Activated naive CD4-positive, alpha-beta T cell treated with anti-CD3 and anti-CD28 coated beads for 36 hours (primary cell): ENCODE measurements at regions of chr1 and their contacts with region 1.

Region 1: GRCh38 chr1:160098852-160099561 is 588 bp upstream of the IGSF8 start:
- DNase-seq: peak; percentile 99
- H3K4me3 Mint-ChIP-seq: peak overlapping the region; percentile 75
- H3K27ac Mint-ChIP-seq: peak overlapping the region; percentile 81
- H3K4me1 Mint-ChIP-seq: peaks cover 50% of the 10 kb centered on the region
- H3K27me3 Mint-ChIP-seq: no peaks in the 10 kb centered on the region

Region 2: DNA sequence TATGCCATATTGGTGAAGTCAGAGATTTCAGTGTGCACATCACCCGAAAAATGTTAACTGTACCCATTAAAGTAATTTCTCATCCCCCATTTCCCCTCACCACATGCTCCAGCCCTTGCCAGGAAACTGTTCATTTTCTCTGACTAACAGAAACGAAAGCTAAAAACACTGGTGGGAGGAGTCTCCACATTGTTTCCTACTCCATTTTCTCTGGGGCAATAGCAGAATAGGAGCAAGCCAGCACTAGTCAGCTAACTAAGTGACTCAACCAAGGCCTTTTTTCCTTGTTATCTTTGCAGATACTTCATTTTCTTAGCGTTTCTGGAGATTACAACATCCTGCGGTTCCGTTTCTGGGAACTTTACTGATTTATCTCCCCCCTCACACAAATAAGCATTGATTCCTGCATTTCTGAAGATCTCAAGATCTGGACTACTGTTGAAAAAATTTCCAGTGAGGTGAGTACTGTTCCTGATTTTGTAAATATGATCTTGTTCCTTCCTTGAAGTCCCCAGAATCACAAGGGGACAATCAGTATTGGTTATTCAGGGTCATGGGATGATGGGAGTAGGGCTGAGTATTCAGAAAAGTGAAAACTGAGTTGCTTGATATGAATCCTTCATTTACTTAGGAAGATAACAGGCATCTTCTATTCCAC is 1089.2 kb before region 1 on chr1 and contains the start of gene IFI16:
- CTCF ChIA-PET with region 1: no interaction called
- intact Hi-C with region 1: loop called (anchors 5 kb)
- DNase-seq: peak; percentile 82
- H3K4me3 Mint-ChIP-seq: peak within 1 kb of the TSS; percentile 91
- H3K27ac Mint-ChIP-seq: peak within 1 kb of the TSS; percentile 99
- H3K4me1 Mint-ChIP-seq: peaks cover 39% of the 10 kb centered on the region
- H3K27me3 Mint-ChIP-seq: no peaks in the 10 kb centered on the region
- total RNA-seq, gene IFI16: 287 to 288 TPM

Region 3: DNA sequence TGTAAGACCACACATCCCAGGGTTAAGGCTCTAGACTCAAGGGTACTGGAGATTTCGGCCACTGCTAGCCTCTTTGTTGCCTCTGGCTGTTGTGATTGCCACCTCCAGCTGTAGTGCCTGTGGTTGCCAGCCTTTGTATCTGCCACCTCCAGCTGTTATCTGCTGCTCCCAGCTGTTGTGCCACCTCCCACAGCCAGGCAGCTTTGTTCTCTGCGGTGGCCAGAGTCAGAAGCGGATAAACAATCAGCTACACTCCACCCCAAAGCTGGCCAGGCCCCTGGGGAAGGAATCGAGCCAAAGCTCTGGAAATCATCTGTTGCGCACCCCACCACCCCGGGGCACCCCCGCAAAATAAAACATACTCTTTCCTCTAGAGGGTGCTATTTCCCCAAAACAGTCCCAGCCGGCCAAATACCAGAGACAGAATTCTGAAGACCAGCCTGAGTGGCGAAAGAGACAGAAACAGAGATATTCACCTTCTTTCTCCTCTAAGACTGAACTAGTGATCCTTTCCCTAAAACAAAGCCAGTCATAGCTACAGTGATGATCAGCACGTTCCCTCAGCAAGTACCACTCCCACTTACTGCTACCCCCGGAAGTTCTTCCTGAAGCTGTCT is 52.4 kb before region 1 on chr1:
- CTCF ChIA-PET with region 1: interaction called, 15 read pairs
- intact Hi-C with region 1: no loop called
- DNase-seq: peak; percentile 56
- H3K4me3 Mint-ChIP-seq: peak overlapping the region; percentile 45
- H3K27ac Mint-ChIP-seq: no peak overlapping the region
- H3K4me1 Mint-ChIP-seq: peaks cover 9% of the 10 kb centered on the region
- H3K27me3 Mint-ChIP-seq: peaks cover 4% of the 10 kb centered on the region

Region 4: GRCh38 chr1:160137216-160137862 is 38.3 kb after region 1 on chr1:
- CTCF ChIA-PET with region 1: no interaction called
- intact Hi-C with region 1: no loop called
- DNase-seq: no peak
- H3K4me3 Mint-ChIP-seq: no peak overlapping the region
- H3K27ac Mint-ChIP-seq: no peak overlapping the region
- H3K4me1 Mint-ChIP-seq: no peaks in the 10 kb centered on the region
- H3K27me3 Mint-ChIP-seq: no peaks in the 10 kb centered on the region

Region 5: DNA sequence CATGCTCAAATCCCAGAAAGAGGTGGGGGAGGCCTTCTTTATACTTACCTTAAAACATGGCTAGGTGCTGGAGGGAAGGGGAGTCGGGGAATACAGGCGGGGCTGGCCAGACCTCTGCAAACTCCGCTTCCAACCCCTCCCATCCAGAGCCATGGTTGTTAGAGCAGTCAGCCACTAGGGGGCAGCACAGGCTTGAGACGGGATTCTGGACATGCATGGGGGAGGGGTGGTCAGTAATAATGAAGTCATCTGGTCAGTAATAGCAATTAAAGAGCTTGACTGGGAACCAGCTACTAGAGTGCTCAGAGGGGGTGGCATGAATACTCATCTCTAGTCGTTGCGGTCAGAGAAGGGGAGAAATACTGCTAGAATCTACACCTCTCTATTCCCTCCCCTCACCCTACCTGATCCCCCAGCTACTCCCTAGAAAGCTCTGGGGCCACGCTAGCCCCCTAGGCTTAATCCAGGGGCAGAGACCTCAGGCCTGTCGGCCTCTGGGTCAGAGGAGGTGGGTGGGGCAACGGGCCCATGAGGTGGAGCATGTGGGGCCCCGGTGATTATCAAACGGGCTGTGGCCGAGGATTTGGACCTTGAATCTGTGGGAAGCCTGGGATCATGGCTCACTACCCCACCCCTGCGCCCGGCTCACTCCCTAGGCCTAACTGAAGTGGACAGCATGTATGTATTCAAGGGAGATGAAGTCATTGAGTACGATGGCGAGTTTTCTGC is 94.2 kb after region 1 on chr1:
- CTCF ChIA-PET with region 1: interaction called, 4 read pairs
- intact Hi-C with region 1: loop called (anchors 1 kb)
- DNase-seq: peak; percentile 91
- H3K4me3 Mint-ChIP-seq: no peak overlapping the region
- H3K27ac Mint-ChIP-seq: no peak overlapping the region
- H3K4me1 Mint-ChIP-seq: no peaks in the 10 kb centered on the region
- H3K27me3 Mint-ChIP-seq: no peaks in the 10 kb centered on the region

Region 6: DNA sequence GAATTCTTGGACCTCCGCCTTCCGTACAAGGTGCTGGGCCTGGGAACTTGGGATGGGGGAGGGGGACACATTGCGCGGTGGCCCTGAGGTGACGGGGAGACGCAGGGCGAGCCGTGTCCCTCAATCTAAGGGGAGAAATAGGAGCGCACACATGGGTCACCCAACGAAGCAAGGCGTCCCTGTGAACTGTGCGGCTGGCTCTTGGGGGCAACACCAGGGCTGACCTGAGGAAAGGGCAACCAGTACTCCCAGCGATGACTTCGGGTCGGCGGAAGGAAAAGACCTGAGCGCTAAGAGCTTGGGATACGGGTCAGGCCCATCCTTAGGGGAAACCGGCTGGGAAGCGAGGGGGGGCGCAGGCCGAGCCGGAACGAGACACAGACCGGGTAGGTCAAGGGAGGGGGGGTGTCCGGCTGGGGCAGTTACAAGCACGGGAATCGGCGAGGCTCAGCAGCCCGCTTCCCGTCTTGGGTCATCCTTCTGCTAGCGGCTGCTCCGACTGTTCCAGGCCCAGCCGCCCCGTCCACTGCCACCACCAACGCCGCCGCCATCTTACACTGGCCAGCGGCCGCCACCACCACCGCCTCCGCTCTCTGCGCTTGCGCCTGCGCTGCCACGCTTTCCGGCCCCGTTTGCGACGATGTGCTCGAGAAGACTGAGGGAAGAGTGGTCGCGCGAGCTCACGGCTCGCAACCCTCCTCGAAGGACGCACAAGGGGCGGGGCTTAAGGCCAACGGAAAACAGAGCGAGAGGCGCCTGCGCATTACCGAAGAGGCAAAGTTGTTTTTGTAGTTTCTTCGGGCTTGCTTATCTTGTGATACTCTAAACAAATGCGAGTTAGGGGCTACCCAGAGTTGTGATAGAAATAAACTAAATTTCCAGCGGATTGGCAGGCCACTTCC is 163.1 kb after region 1 on chr1 and contains the start of gene DCAF8:
- CTCF ChIA-PET with region 1: interaction called, 4 read pairs
- intact Hi-C with region 1: loop called (anchors 1 kb)
- DNase-seq: peak; percentile 99
- H3K4me3 Mint-ChIP-seq: peak within 1 kb of the TSS; percentile 98
- H3K27ac Mint-ChIP-seq: peak within 1 kb of the TSS; percentile 100
- H3K4me1 Mint-ChIP-seq: peaks cover 49% of the 10 kb centered on the region
- H3K27me3 Mint-ChIP-seq: no peaks in the 10 kb centered on the region
- total RNA-seq, gene DCAF8: 218 to 226 TPM

Region 7: DNA sequence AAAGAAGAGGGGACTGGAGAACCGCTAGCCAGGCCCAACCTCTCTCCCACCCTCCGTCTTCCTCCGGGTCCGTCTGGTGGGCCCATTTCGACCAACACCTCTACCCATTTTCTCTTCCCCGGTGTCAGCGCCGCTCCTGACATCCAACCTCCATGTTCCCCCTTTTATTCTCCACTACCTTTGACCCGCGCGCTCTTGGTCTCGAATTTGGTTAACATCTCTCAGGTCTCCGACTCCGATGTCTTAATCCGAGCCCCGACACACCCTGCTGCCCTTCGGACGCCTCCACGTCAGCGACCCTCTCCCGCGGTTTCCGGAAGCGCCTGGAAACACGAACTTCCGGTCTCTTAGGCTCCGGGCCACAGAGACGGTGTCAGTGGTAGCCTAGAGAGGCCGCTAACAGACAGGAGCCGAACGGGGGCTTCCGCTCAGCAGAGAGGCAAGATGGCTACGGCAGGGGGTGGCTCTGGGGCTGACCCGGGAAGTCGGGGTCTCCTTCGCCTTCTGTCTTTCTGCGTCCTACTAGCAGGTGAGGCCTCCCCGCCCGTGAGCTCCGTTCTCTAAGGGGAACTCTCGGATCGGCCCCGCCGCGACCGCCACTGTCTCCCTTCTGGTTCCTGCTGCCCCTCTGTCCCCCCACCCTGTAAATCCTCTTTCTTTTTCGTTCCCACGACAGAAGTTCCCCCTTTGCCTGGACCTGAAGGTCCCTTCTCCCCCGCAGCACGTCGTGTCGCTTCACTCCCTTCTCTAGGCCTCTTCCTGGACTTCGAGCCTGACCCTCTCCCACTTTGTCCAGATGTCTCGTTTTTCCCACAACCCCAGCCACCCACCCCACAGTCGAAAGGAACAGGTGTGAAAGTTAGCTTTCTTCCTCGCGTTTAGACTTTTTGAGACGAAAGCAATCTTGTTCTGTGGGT is 244.2 kb after region 1 on chr1 and contains the starts of genes COPA and NCSTN:
- CTCF ChIA-PET with region 1: interaction called, 3 read pairs
- intact Hi-C with region 1: loop called (anchors 1 kb)
- DNase-seq: peak; percentile 95
- H3K4me3 Mint-ChIP-seq: peak within 1 kb of the TSS; percentile 99
- H3K27ac Mint-ChIP-seq: peak within 1 kb of the TSS; percentile 98
- H3K4me1 Mint-ChIP-seq: peaks cover 43% of the 10 kb centered on the region
- H3K27me3 Mint-ChIP-seq: no peaks in the 10 kb centered on the region
- total RNA-seq, gene COPA: 97.8 to 101 TPM
- total RNA-seq, gene NCSTN: 27.4 to 29.4 TPM

Region 8: GRCh38 chr1:160607011-160607671 is 508.1 kb after region 1 on chr1:
- CTCF ChIA-PET with region 1: no interaction called
- intact Hi-C with region 1: loop called (anchors 2 kb)
- DNase-seq: peak; percentile 81
- H3K4me3 Mint-ChIP-seq: no peak overlapping the region
- H3K27ac Mint-ChIP-seq: peak overlapping the region; percentile 82
- H3K4me1 Mint-ChIP-seq: peaks cover 48% of the 10 kb centered on the region
- H3K27me3 Mint-ChIP-seq: no peaks in the 10 kb centered on the region

Region 9: GRCh38 chr1:161185282-161185682 is 1086.3 kb after region 1 on chr1:
- CTCF ChIA-PET with region 1: no interaction called
- intact Hi-C with region 1: no loop called
- DNase-seq: peak; percentile 94
- H3K4me3 Mint-ChIP-seq: peak overlapping the region; percentile 67
- H3K27ac Mint-ChIP-seq: peak overlapping the region; percentile 94
- H3K4me1 Mint-ChIP-seq: peaks cover 78% of the 10 kb centered on the region
- H3K27me3 Mint-ChIP-seq: no peaks in the 10 kb centered on the region